ENCODE measurements at regions of chr3 and their contacts with region 1.

Region 1: GRCh38 chr3:190197346-190197763 is 76.7 kb upstream of the P3H2 start:
- DNase-seq: no peak
- H3K4me3 ChIP-seq: no peak overlapping the region
- CTCF ChIP-seq: no peak

Region 2: GRCh38 chr3:190155752-190156151 is 41.6 kb before region 1 on chr3:
- in situ Hi-C with region 1: loop called (anchors 5 kb)
- DNase-seq: peak; percentile 20
- H3K4me3 ChIP-seq: no peak overlapping the region
- CTCF ChIP-seq: no peak

Region 3: DNA sequence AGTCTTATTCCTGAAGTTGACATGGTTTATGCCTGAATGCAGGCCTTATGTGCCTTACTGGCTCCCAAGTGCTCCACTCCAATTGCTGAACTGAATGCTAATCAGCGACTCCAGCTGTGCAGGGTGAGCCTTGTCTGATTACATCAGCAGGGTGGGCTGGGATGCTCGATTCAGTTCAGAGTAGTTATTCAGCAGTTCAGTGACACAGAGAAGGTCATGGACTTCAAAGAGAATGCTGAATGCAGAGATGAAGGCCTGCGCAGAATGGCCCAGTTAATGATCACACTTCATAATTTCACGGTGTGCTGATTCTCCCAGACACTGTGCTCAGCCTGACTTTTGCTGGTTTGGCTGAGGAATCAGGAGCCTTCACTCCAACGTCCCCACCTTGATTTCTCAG is 61.3 kb after region 1 on chr3:
- in situ Hi-C with region 1: no loop called
- DNase-seq: no peak
- H3K4me3 ChIP-seq: no peak overlapping the region
- CTCF ChIP-seq: no peak

Measured in astrocyte of the cerebellum (primary cell).